Endothelial cell of umbilical vein (primary cell): ENCODE measurements at regions of chr6 and their contacts with region 1.

Region 1: GRCh38 chr6:132236744-132237143 is 164.5 kb downstream of the MOXD1 start:
- DNase-seq: no peak
- H3K4me3 ChIP-seq: no peak overlapping the region
- H3K27ac ChIP-seq: no peak overlapping the region
- H3K4me1 ChIP-seq: no peaks in the 10 kb centered on the region
- H3K27me3 ChIP-seq: no peaks in the 10 kb centered on the region
- CTCF ChIP-seq: no peak
- POLR2A ChIP-seq: no peak

Region 2: GRCh38 chr6:131156411-131156810 is 1080.3 kb before region 1 on chr6:
- CTCF ChIA-PET with region 1: no interaction called
- POLR2A ChIA-PET with region 1: no interaction called
- dilution Hi-C with region 1: no loop called
- intact Hi-C with region 1: no loop called
- DNase-seq: no peak
- H3K4me3 ChIP-seq: no peak overlapping the region
- H3K27ac ChIP-seq: no peak overlapping the region
- H3K4me1 ChIP-seq: no peaks in the 10 kb centered on the region
- H3K27me3 ChIP-seq: no peaks in the 10 kb centered on the region
- CTCF ChIP-seq: no peak
- POLR2A ChIP-seq: no peak

Region 3: GRCh38 chr6:131877999-131878789 is 358.6 kb before region 1 on chr6:
- CTCF ChIA-PET with region 1: no interaction called
- POLR2A ChIA-PET with region 1: interaction called, 10 read pairs
- dilution Hi-C with region 1: no loop called
- intact Hi-C with region 1: no loop called
- DNase-seq: no peak
- H3K4me3 ChIP-seq: no peak overlapping the region
- H3K27ac ChIP-seq: no peak overlapping the region
- H3K4me1 ChIP-seq: no peaks in the 10 kb centered on the region
- H3K27me3 ChIP-seq: no peaks in the 10 kb centered on the region
- CTCF ChIP-seq: no peak
- POLR2A ChIP-seq: no peak

Region 4: DNA sequence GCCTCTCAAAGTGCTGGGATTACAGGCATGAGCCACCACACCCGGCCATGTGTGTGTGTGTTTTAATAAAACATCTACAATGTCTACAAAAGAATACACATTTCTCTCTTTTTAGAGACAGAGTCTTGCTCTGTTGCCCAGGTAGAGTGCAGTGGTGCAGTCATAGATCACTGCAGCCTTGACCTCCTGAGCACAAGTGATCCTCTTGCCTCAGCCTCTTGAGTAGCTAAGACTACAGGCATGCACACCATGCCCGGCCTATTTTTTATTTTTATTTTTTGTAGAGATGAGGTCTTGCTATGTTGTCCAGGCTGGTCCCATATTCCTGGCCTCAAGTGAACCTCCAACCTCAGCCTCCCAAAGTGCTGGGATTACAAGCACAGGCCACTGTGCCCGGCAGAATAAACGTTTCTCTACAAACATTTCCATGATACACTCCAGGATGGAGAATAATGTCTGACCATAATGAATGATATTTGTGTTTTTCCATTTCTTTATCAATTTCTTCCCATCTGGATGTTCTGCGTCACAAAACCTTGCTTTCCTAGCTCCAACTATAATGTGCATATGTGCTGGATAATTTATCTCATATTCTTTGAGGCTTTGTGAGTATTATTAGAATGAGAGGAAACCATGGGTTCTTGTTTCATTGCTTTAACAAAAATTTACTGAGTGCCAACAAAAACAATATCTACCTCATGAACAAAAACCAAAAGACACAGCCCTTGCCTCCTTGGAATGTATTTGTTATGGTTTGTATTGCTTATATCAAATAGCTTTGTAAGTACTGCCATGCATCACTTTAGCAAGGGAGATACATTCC is 257.0 kb before region 1 on chr6:
- CTCF ChIA-PET with region 1: no interaction called
- POLR2A ChIA-PET with region 1: no interaction called
- dilution Hi-C with region 1: no loop called
- intact Hi-C with region 1: no loop called
- DNase-seq: peak; percentile 95
- H3K4me3 ChIP-seq: no peak overlapping the region
- H3K27ac ChIP-seq: peak overlapping the region; percentile 74
- H3K4me1 ChIP-seq: peaks cover 37% of the 10 kb centered on the region
- H3K27me3 ChIP-seq: no peaks in the 10 kb centered on the region
- CTCF ChIP-seq: no peak
- POLR2A ChIP-seq: no peak

Region 5: GRCh38 chr6:132365281-132365907 is 128.7 kb after region 1 on chr6:
- CTCF ChIA-PET with region 1: no interaction called
- POLR2A ChIA-PET with region 1: no interaction called
- dilution Hi-C with region 1: no loop called
- intact Hi-C with region 1: no loop called
- DNase-seq: no peak
- H3K4me3 ChIP-seq: no peak overlapping the region
- H3K27ac ChIP-seq: no peak overlapping the region
- H3K4me1 ChIP-seq: no peaks in the 10 kb centered on the region
- H3K27me3 ChIP-seq: peaks cover 15 to 27% of the 10 kb centered on the region in 2 experiments
- CTCF ChIP-seq: no peak
- POLR2A ChIP-seq: no peak